ENCODE measurements at regions of chr10 and their contacts with region 1.

Region 1: GRCh38 chr10:88932539-88933256 is 19.9 kb downstream of the ACTA2 start:
- DNase-seq: peak; percentile 44
- H3K4me3 Mint-ChIP-seq: no peak overlapping the region
- H3K27ac Mint-ChIP-seq: no peak overlapping the region
- H3K4me1 Mint-ChIP-seq: peaks cover 20% of the 10 kb centered on the region
- H3K27me3 Mint-ChIP-seq: no peaks in the 10 kb centered on the region

Region 2: GRCh38 chr10:88565072-88565471 is 367.6 kb before region 1 on chr10:
- CTCF ChIA-PET with region 1: interaction called, 10 read pairs
- POLR2A ChIA-PET with region 1: no interaction called
- intact Hi-C with region 1: loop called (anchors 1 kb)
- DNase-seq: no peak
- H3K4me3 Mint-ChIP-seq: no peak overlapping the region
- H3K27ac Mint-ChIP-seq: no peak overlapping the region
- H3K4me1 Mint-ChIP-seq: peaks cover 5% of the 10 kb centered on the region
- H3K27me3 Mint-ChIP-seq: no peaks in the 10 kb centered on the region

Region 3: GRCh38 chr10:88651101-88651551 is 281.6 kb before region 1 on chr10:
- CTCF ChIA-PET with region 1: no interaction called
- POLR2A ChIA-PET with region 1: no interaction called
- intact Hi-C with region 1: no loop called
- DNase-seq: no peak
- H3K4me3 Mint-ChIP-seq: no peak overlapping the region
- H3K27ac Mint-ChIP-seq: no peak overlapping the region
- H3K4me1 Mint-ChIP-seq: no peaks in the 10 kb centered on the region
- H3K27me3 Mint-ChIP-seq: peaks cover 7% of the 10 kb centered on the region

Region 4: GRCh38 chr10:88835096-88835909 is 97.4 kb before region 1 on chr10:
- CTCF ChIA-PET with region 1: interaction called, 376 read pairs
- POLR2A ChIA-PET with region 1: interaction called, 5 read pairs
- intact Hi-C with region 1: loop called (anchors 1 kb)
- DNase-seq: peak; percentile 92
- H3K4me3 Mint-ChIP-seq: no peak overlapping the region
- H3K27ac Mint-ChIP-seq: no peak overlapping the region
- H3K4me1 Mint-ChIP-seq: peaks cover 28% of the 10 kb centered on the region
- H3K27me3 Mint-ChIP-seq: no peaks in the 10 kb centered on the region

Region 5: GRCh38 chr10:88893611-88894010 is 39.1 kb before region 1 on chr10:
- CTCF ChIA-PET with region 1: interaction called, 13 read pairs
- POLR2A ChIA-PET with region 1: interaction called, 3 read pairs
- intact Hi-C with region 1: no loop called
- DNase-seq: no peak
- H3K4me3 Mint-ChIP-seq: no peak overlapping the region
- H3K27ac Mint-ChIP-seq: no peak overlapping the region
- H3K4me1 Mint-ChIP-seq: peaks cover 60% of the 10 kb centered on the region
- H3K27me3 Mint-ChIP-seq: no peaks in the 10 kb centered on the region

Region 6: DNA sequence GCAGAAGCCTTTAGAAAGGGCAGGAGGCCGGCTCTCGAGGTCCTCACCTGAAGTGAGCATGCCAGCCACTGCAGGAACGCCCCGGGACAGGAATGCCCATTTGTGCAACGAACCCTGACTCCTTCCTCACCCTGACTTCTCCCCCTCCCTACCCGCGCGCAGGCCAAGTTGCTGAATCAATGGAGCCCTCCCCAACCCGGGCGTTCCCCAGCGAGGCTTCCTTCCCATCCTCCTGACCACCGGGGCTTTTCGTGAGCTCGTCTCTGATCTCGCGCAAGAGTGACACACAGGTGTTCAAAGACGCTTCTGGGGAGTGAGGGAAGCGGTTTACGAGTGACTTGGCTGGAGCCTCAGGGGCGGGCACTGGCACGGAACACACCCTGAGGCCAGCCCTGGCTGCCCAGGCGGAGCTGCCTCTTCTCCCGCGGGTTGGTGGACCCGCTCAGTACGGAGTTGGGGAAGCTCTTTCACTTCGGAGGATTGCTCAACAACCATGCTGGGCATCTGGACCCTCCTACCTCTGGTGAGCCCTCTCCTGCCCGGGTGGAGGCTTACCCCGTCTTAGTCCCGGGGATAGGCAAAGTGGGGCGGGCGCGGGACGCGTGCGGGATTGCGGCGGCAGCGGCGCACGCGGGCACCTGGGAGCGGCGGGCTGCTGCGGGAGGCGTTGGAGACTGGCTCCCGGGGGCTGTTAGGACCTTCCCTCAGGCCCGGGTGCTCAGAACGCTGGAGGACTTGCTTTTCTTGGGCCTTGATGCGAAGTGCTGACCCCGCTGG is 57.9 kb after region 1 on chr10 and contains the start of gene FAS:
- CTCF ChIA-PET with region 1: interaction called, 89 read pairs
- POLR2A ChIA-PET with region 1: no interaction called
- intact Hi-C with region 1: loop called (anchors 1 kb)
- DNase-seq: peak; percentile 94
- H3K4me3 Mint-ChIP-seq: peak within 1 kb of the TSS; percentile 86
- H3K27ac Mint-ChIP-seq: peak within 1 kb of the TSS; percentile 96
- H3K4me1 Mint-ChIP-seq: peaks cover 65% of the 10 kb centered on the region
- H3K27me3 Mint-ChIP-seq: no peaks in the 10 kb centered on the region
- total RNA-seq, gene FAS: 62.2 to 63.5 TPM

Region 7: GRCh38 chr10:89029785-89030437 is 97.2 kb after region 1 on chr10:
- CTCF ChIA-PET with region 1: interaction called, 93 read pairs
- POLR2A ChIA-PET with region 1: no interaction called
- intact Hi-C with region 1: loop called (anchors 1 kb)
- DNase-seq: peak; percentile 78
- H3K4me3 Mint-ChIP-seq: no peak overlapping the region
- H3K27ac Mint-ChIP-seq: no peak overlapping the region
- H3K4me1 Mint-ChIP-seq: peaks cover 41% of the 10 kb centered on the region
- H3K27me3 Mint-ChIP-seq: no peaks in the 10 kb centered on the region

Region 8: DNA sequence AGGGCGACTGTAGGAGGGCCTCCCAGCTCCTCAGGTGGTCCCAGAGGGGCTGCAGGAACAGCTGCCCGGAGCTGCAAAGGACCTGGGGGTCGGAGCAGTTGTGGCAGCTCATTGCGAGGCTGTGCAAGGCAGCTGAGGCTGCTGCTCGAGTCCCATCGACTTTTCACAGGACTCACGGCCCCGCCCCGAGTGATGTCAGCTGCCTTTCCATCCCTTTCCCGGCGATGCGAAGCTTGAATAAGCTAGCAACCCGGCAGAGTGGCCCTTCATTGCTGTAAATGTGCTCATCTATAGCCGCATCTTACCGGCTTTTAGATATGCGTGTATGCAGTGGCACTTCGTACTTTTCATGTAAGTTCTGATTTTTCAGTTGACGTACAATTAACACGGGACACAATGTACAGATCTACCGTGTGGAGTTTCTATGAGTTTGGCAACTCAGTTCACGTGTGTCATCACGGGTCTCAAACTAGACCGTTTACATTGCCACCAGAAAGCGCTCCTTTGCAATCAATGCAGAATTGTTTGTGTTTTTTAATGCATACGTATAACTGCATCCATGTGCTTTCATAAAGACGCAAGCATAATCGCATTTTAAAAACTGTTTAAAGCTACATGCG is 274.6 kb after region 1 on chr10 and contains the start of gene CH25H:
- CTCF ChIA-PET with region 1: interaction called, 65 read pairs
- POLR2A ChIA-PET with region 1: interaction called, 6 read pairs
- intact Hi-C with region 1: no loop called
- DNase-seq: peak; percentile 71
- H3K4me3 Mint-ChIP-seq: peak within 1 kb of the TSS; percentile 64
- H3K27ac Mint-ChIP-seq: no peak within 1 kb of the TSS
- H3K4me1 Mint-ChIP-seq: peaks cover 11% of the 10 kb centered on the region
- H3K27me3 Mint-ChIP-seq: peaks cover 29% of the 10 kb centered on the region
- total RNA-seq, gene CH25H: 0.12 TPM in 1 of 2 experiments, not detected in the other

Measured in activated CD4-positive, alpha-beta memory T cell treated with anti-CD3 and anti-CD28 coated beads for 36 hours (primary cell).